Activated CD4-positive, alpha-beta T cell treated with anti-CD3 and anti-CD28 coated beads, Interleukin-2, amount 10 ng/mL, durations not matched to agents 24 days and 14 days (primary cell): ENCODE measurements at regions of chr3 and their contacts with region 1.

Region 1: GRCh38 chr3:192917404-192918274 is at the start of gene MB21D2:
- DNase-seq: peak; percentile 91
- H3K4me3 Mint-ChIP-seq: peak within 1 kb of the TSS; percentile 96
- H3K27ac Mint-ChIP-seq: peak within 1 kb of the TSS; percentile 92
- H3K4me1 Mint-ChIP-seq: peaks cover 46% of the 10 kb centered on the region
- H3K27me3 Mint-ChIP-seq: peaks cover 49% of the 10 kb centered on the region
- total RNA-seq, gene MB21D2: 8.6 and 9.4 TPM in 2 replicates

Region 2: GRCh38 chr3:192831111-192831644 is 86.5 kb before region 1 on chr3:
- intact Hi-C with region 1: loop called (anchors 1 kb)
- DNase-seq: peak; percentile 66
- H3K4me3 Mint-ChIP-seq: peak overlapping the region; percentile 26
- H3K27ac Mint-ChIP-seq: peak overlapping the region; percentile 83
- H3K4me1 Mint-ChIP-seq: peaks cover 39% of the 10 kb centered on the region
- H3K27me3 Mint-ChIP-seq: no peaks in the 10 kb centered on the region

Region 3: GRCh38 chr3:192892981-192893700 is 24.5 kb before region 1 on chr3:
- intact Hi-C with region 1: loop called (anchors 1 kb)
- DNase-seq: peak; percentile 94
- H3K4me3 Mint-ChIP-seq: peak overlapping the region; percentile 62
- H3K27ac Mint-ChIP-seq: peak overlapping the region; percentile 84
- H3K4me1 Mint-ChIP-seq: peaks cover 81% of the 10 kb centered on the region
- H3K27me3 Mint-ChIP-seq: peaks cover 20% of the 10 kb centered on the region

Region 4: GRCh38 chr3:192933779-192934460 is 16.3 kb after region 1 on chr3:
- intact Hi-C with region 1: loop called (anchors 1 kb)
- DNase-seq: no peak
- H3K4me3 Mint-ChIP-seq: no peak overlapping the region
- H3K27ac Mint-ChIP-seq: peak overlapping the region; percentile 82
- H3K4me1 Mint-ChIP-seq: peaks cover 9% of the 10 kb centered on the region
- H3K27me3 Mint-ChIP-seq: peaks cover 2% of the 10 kb centered on the region

Region 5: GRCh38 chr3:193040836-193041672 is 123.4 kb after region 1 on chr3:
- intact Hi-C with region 1: loop called (anchors 2 kb)
- DNase-seq: peak; percentile 64
- H3K4me3 Mint-ChIP-seq: no peak overlapping the region
- H3K27ac Mint-ChIP-seq: peak overlapping the region; percentile 26
- H3K4me1 Mint-ChIP-seq: peaks cover 8% of the 10 kb centered on the region
- H3K27me3 Mint-ChIP-seq: peaks cover 17% of the 10 kb centered on the region